ENCODE measurements at regions of chr10 and their contacts with region 1.

Region 1: DNA sequence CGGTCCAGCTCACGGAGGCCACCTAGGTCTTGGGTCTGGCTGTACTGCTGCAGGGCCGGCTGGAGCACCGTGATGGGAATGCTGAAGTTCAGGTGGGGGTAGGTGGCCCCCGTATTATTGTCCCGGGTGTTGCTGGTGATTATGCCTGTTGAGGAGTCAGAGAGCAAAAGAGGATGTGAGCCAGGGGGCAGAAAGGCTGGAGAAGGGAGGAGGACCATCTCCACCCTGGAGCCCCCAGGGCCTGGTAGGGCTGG is 6.6 kb downstream of the TYSND1 start:
- DNase-seq: no peak
- H3K4me3 ChIP-seq: no peak overlapping the region
- CTCF ChIP-seq: no peak

Region 2: DNA sequence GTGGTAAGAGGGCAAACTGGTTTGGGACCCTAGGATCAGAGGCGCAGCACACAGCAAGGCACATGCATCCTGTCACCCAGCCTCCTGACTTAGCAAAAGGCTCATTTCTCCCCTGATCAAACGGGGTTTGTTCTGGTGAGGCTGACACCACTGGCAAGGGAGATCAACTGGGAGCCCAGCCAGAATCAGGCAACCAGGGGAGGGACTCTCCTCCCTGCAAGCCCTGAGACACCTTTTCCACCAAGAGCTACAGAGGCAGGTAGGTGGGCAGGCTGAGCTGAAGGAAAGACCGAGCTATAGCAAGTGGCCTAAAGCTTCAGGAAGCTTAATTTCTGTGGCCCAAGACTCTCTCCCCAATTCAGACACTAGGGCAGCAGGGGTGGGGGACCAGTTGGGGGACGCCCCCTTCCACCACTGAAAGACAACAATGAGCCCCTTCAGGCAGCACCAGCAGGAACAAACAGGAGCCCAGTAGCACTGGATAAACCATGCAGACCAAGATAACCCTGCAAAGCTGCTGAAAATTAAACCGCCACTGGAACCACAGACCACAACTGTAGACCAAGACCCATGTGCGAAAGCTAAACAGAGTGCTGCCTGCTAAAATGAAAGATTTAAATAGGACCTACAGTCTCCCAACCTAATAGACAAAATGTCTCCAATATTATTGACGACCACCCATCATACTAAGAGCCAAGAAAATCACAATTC is 57.5 kb after region 1 on chr10:
- in situ Hi-C with region 1: loop called (anchors 5 kb)
- DNase-seq: no peak
- H3K4me3 ChIP-seq: no peak overlapping the region
- CTCF ChIP-seq: no peak